ENCODE measurements at regions of chr11 and their contacts with region 1.

Region 1: GRCh38 chr11:71977743-71978418 is 20.8 kb upstream of the IL18BP start:
- DNase-seq: peak; percentile 49
- H3K4me3 ChIP-seq: no peak overlapping the region
- H3K27ac ChIP-seq: no peak overlapping the region; a peak in 1 of 4 replicates
- H3K4me1 ChIP-seq: no peaks in the 10 kb centered on the region; a peak in 2 of 4 replicates
- H3K27me3 ChIP-seq: no peaks in the 10 kb centered on the region
- CTCF ChIP-seq: peak; percentile 86
- EP300 ChIP-seq: no peak
- RAD21 ChIP-seq: peak; percentile 88

Region 2: DNA sequence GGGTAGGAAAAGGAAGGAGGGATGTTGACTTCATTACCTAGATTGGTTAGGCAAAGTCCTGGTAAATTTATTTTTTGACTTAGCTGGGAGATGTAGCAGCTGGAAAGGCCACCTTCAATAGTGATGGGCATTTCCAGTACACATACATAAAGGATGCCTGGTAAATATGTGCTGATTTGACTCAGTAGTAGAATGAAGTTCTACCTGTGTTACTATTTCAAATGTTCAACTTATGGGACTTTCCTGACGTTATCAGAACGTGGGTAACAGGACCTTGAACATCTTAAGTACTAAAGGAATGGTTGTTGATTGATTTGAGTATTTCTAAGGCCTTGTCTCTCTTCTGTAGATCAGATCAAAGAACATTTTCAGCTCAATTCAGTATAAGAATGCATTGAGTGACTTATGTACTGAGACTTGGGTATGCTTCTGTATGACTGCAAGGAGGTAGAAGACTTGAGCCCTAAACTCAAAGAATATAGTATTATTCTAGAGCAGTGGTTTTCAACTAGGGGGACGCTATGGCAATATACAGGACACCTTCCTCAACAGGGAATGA is 21.9 kb before region 1 on chr11:
- CTCF ChIA-PET with region 1: interaction called, 24 read pairs
- POLR2A ChIA-PET with region 1: no interaction called
- DNase-seq: no peak
- H3K4me3 ChIP-seq: no peak overlapping the region
- H3K27ac ChIP-seq: no peak overlapping the region
- H3K4me1 ChIP-seq: no peaks in the 10 kb centered on the region
- H3K27me3 ChIP-seq: no peaks in the 10 kb centered on the region
- CTCF ChIP-seq: no peak
- EP300 ChIP-seq: no peak
- RAD21 ChIP-seq: no peak

Region 3: GRCh38 chr11:71988050-71988449 is 10.2 kb after region 1 on chr11:
- CTCF ChIA-PET with region 1: interaction called, 34 read pairs
- POLR2A ChIA-PET with region 1: no interaction called
- DNase-seq: no peak
- H3K4me3 ChIP-seq: no peak overlapping the region
- H3K27ac ChIP-seq: peak overlapping the region; percentile 27 to 51; a peak in 3 of 4 replicates
- H3K4me1 ChIP-seq: peaks cover 0 to 16% of the 10 kb centered on the region in 2 experiments; a peak in 2 of 4 replicates
- H3K27me3 ChIP-seq: no peaks in the 10 kb centered on the region
- CTCF ChIP-seq: no peak
- EP300 ChIP-seq: no peak
- RAD21 ChIP-seq: no peak

Region 4: GRCh38 chr11:72004936-72005500 is 27.1 kb after region 1 on chr11:
- CTCF ChIA-PET with region 1: interaction called, 26 read pairs
- POLR2A ChIA-PET with region 1: no interaction called
- DNase-seq: no peak
- H3K4me3 ChIP-seq: no peak overlapping the region
- H3K27ac ChIP-seq: peak overlapping the region in 1 of 2 experiments; percentile 50; a peak in 1 of 4 replicates
- H3K4me1 ChIP-seq: peaks cover 0 to under 1% of the 10 kb centered on the region in 2 experiments; a peak in 1 of 4 replicates
- H3K27me3 ChIP-seq: no peaks in the 10 kb centered on the region
- CTCF ChIP-seq: no peak
- EP300 ChIP-seq: no peak
- RAD21 ChIP-seq: no peak

Region 5: GRCh38 chr11:72024069-72024754 is 46.3 kb after region 1 on chr11:
- CTCF ChIA-PET with region 1: interaction called, 18 read pairs
- POLR2A ChIA-PET with region 1: interaction called, 3 read pairs
- DNase-seq: no peak
- H3K4me3 ChIP-seq: no peak overlapping the region
- H3K27ac ChIP-seq: peak overlapping the region in 1 of 2 experiments; percentile 53; a peak in 2 of 4 replicates
- H3K4me1 ChIP-seq: peaks cover 11 to 16% of the 10 kb centered on the region in 2 experiments; a peak in 3 of 4 replicates
- H3K27me3 ChIP-seq: no peaks in the 10 kb centered on the region
- CTCF ChIP-seq: no peak
- EP300 ChIP-seq: peak in 1 of 2 experiments; percentile 77; a peak in 1 of 4 replicates
- RAD21 ChIP-seq: no peak

Region 6: DNA sequence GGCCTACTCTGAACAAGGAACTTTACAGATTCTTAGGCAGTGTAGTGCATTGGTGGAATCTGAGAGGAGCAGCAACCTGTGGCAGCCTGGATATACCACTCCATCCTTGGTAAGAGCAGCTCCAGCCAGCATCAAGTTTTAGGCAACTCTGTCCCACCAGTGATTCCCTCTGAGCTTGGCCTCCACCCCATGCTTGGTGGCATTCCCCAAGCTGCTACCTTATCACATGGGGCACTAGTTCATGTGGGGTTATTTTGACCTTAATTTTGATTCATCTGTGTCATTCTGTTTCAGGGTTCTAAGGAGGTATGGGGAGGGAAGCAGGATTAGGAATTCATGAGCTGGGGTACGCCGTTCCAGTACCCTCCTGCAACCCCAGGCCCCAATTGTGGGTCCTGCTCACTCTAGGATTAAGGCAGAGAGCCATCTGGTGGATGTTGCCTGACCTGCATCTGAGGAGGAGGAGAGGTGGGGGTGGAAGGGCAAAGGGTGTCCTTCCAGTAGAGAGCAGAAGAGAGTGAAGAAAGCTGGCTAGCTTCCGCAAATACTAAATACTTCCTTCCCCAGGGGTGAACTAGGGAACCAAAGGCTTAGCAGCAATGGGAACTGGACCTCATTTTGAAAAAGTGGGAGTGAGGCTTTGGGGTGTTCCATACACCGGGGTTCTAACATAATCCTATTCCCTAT is 113.3 kb after region 1 on chr11:
- CTCF ChIA-PET with region 1: interaction called, 36 read pairs
- POLR2A ChIA-PET with region 1: no interaction called
- DNase-seq: peak; percentile 78
- H3K4me3 ChIP-seq: no peak overlapping the region; a peak in 1 of 4 replicates
- H3K27ac ChIP-seq: no peak overlapping the region
- H3K4me1 ChIP-seq: peaks cover 0 to 16% of the 10 kb centered on the region in 2 experiments; a peak in 2 of 4 replicates
- H3K27me3 ChIP-seq: no peaks in the 10 kb centered on the region
- CTCF ChIP-seq: peak; percentile 88
- EP300 ChIP-seq: no peak
- RAD21 ChIP-seq: peak; percentile 86

Region 7: DNA sequence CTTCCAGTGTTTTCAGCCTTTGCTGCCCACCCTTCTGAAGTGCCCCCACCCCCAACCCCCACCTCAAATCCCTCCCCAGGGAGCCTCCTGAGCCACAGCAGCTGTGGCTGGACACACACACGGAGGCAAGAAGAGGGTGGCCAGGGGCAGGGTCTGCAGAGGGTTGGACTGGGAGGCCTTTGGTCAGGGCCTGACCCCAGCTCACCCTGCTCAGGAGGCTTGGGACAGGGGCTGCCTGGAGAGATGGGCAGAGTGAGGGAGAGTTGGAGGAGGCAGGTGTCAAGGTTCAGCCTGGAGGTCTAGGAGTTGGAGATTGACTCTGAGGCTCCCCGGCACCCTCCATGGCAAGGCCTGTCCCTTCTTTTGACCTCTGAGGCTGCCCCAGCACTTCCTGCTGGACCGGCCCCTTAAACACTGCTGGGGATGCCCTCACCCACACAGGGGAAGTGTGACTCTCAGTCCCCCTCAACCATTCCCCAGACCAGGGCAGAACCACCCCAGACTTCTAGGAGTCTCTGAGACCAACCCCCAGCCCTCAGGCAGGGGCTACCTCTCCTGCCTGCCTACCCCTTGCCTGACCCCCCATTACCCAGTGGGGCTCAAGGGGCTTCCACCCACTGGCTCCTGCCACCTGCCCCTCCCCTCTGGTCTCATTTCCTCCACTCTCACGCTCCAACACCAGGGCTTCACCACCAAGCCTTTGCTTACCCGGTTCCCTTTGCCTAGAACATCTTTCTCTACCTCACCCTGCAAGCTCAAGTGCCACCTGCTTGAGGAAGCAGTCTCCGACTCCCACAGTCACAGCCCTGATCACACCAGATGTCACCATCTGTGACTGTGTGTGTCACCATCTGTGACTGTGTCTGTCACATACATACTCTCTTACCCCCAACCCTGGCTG is 765.7 kb after region 1 on chr11:
- CTCF ChIA-PET with region 1: no interaction called
- POLR2A ChIA-PET with region 1: no interaction called
- DNase-seq: no peak
- H3K4me3 ChIP-seq: no peak overlapping the region
- H3K27ac ChIP-seq: no peak overlapping the region; a peak in 1 of 4 replicates
- H3K4me1 ChIP-seq: peaks cover 0 to 69% of the 10 kb centered on the region in 2 experiments; a peak in 2 of 4 replicates
- H3K27me3 ChIP-seq: no peaks in the 10 kb centered on the region
- CTCF ChIP-seq: no peak
- EP300 ChIP-seq: no peak
- RAD21 ChIP-seq: no peak